WTC11 (cell line): ENCODE measurements at regions of chr1 and their contacts with region 1.

Region 1: DNA sequence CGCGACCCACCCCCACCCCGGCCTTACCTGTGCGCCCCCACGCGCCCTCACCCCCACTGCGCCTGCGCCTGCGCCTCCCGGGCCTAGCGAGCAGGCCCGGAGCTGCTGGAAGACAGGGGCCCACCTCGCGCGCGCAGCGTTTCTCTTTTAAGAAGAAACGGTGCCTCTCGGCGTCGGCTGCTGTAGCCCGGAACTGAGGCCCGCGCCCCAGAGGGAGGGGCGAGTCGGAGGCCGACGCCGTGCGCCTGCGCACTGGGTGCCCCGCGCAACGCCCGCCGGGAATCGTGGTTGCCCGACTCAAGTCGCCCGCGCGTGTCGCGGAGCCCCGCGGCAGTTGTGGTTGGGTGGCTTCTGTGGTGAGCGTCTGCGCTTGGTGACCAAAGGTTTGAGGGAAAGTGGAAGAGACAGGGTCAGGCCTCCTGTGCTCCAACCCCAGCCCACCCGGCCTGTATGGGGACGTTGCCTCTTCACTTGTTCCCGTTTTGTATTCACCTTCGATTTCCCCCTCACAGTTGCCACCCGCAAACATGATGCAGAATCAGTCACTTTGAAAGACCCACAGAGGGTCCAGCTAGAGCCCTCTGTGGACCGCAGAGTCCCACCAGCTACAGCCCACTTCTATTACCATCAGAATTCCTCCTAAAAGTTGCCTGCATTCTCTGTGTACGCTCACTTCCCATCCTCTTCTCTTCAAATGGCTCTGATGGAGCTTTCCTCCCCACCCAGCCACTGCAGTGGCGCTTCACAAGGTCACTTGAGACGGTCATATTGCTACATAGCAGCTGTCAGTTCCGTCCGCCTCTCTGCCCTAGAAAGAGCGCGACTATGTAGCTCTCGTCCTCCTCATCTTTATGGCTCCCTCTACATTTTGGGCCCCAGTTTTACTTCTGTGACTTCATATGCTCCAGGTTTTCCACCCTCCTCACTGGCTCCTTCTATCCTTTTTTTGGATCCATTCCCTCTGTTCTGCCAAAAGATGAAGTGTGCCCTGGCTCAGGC is at the start of gene ZNF692:
- DNase-seq: peak; percentile 95
- ATAC-seq: peak; percentile 73
- H3K4me3 Mint-ChIP-seq: peak within 1 kb of the TSS; percentile 88
- H3K27ac Mint-ChIP-seq: peak within 1 kb of the TSS; percentile 95
- H3K4me1 Mint-ChIP-seq: peaks cover 26% of the 10 kb centered on the region
- H3K27me3 Mint-ChIP-seq: peaks cover 36% of the 10 kb centered on the region
- CTCF ChIP-seq: no peak
- total RNA-seq, gene ZNF692: 50.7 to 59.1 TPM (median 56.0 TPM) in 3 replicates

Region 2: GRCh38 chr1:248596615-248597014 is 262.6 kb before region 1 on chr1:
- CTCF ChIA-PET with region 1: no interaction called
- POLR2A ChIA-PET with region 1: no interaction called
- DNase-seq: no peak
- ATAC-seq: no peak
- H3K4me3 Mint-ChIP-seq: no peak overlapping the region
- H3K27ac Mint-ChIP-seq: no peak overlapping the region
- H3K4me1 Mint-ChIP-seq: no peaks in the 10 kb centered on the region
- H3K27me3 Mint-ChIP-seq: peaks cover 12% of the 10 kb centered on the region
- CTCF ChIP-seq: no peak

Region 3: DNA sequence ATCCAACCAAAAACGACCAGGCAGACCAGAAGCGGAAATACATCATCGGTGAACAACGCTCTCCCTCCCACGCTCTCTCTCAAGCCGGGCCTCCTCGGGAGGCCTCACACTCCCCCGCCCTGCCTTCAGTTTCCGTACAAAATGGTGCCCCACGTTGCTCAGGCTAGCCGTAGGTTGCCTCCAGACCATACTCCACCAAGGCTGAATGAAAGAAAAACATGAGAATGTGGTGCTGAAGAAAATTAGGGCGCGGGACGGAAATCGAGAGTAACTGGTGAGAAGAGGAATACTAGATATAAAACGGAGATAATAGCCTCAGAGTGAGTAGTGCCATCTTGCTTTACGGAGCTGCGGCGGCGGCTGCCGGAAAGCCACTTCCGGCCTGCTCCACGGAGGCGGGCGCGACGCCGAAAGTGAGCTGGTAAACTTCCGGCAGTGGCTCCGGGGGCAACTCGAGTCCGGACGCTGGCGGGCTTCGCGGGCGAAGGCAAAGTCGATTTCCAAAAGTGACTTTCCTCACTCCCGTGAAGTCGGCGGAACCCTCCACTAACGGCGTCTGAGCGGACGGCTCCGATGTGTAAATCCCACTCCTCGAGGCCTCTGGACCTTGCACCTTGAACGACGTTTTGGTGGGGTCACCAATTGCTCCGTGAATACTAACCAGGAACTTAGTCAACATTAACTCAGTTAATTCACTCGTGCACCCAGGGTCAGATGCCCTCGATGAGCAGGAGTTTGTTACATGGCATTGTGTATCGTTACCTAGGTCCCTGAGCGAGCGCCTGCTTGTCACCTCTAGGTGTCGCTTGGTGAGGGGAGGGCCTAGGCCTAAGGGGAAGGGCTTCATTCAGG is 33.1 kb before region 1 on chr1 and contains the start of gene SH3BP5L:
- CTCF ChIA-PET with region 1: interaction called, 13 read pairs
- POLR2A ChIA-PET with region 1: interaction called, 11 read pairs
- DNase-seq: peak; percentile 85
- ATAC-seq: peak; percentile 91
- H3K4me3 Mint-ChIP-seq: peak within 1 kb of the TSS; percentile 99
- H3K27ac Mint-ChIP-seq: peak within 1 kb of the TSS; percentile 100
- H3K4me1 Mint-ChIP-seq: peaks cover 16% of the 10 kb centered on the region
- H3K27me3 Mint-ChIP-seq: no peaks in the 10 kb centered on the region; the same call in 1 of the 2 replicates
- CTCF ChIP-seq: no peak; the same call in 1 of the 2 replicates
- total RNA-seq, gene SH3BP5L: 28.3 to 32.9 TPM (median 28.3 TPM) in 3 replicates

Region 4: GRCh38 chr1:248873409-248873992 is 14.3 kb after region 1 on chr1:
- CTCF ChIA-PET with region 1: interaction called, 40 read pairs
- POLR2A ChIA-PET with region 1: interaction called, 20 read pairs
- DNase-seq: peak; percentile 97
- ATAC-seq: peak; percentile 76
- H3K4me3 Mint-ChIP-seq: peak overlapping the region; percentile 96
- H3K27ac Mint-ChIP-seq: peak overlapping the region; percentile 99
- H3K4me1 Mint-ChIP-seq: peaks cover 3% of the 10 kb centered on the region; the same call in 1 of the 2 replicates
- H3K27me3 Mint-ChIP-seq: peaks cover 8% of the 10 kb centered on the region
- CTCF ChIP-seq: no peak

Region 5: DNA sequence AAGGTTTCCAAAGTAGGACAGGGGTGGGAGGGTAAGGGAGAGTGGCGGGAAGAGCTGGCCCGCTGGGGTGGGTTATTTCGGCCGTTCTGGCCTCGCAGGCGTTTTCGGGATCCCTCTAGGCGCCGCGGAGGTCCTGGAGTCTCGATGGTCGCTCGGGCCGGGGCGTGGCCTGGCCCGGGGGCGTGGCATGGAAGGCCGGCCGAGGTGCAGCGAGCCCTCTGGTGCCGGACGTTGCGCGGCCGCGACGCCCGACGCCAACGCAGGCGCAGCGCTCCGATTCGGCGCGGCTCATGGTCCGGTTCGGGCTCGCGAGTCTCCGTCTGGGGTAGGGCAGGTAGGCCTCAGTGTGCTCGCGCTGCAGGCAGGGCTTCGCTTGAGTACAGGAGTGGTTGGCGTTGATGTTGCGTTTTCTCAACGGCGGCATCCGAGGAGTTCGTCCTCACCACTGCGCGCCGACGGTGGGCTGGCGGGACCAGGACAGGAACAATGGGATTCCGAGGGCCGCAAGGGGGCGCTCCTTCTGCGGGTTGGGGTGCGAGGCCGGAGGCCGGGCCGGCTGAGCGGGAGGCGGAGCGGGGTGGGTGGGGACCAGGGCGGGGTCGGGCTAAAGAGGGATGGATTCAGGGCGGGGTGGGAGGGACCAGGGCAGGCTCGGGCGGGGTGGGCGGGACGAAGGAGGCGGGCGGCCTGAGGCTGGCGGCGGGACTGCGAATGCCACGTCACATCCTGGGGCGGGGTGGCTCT is 47.0 kb after region 1 on chr1 and contains the start of gene PGBD2:
- CTCF ChIA-PET with region 1: interaction called, 24 read pairs
- POLR2A ChIA-PET with region 1: interaction called, 13 read pairs
- DNase-seq: peak; percentile 98
- ATAC-seq: peak; percentile 90
- H3K4me3 Mint-ChIP-seq: peak within 1 kb of the TSS; percentile 92
- H3K27ac Mint-ChIP-seq: peak within 1 kb of the TSS; percentile 100
- H3K4me1 Mint-ChIP-seq: peaks cover 35% of the 10 kb centered on the region
- H3K27me3 Mint-ChIP-seq: peaks cover 4% of the 10 kb centered on the region; the same call in 1 of the 2 replicates
- CTCF ChIP-seq: peak; percentile 62
- total RNA-seq, gene PGBD2: 6.5 to 6.9 TPM (median 6.6 TPM) in 3 replicates